ENCODE measurements at regions of chr5 and their contacts with region 1.

Region 1: DNA sequence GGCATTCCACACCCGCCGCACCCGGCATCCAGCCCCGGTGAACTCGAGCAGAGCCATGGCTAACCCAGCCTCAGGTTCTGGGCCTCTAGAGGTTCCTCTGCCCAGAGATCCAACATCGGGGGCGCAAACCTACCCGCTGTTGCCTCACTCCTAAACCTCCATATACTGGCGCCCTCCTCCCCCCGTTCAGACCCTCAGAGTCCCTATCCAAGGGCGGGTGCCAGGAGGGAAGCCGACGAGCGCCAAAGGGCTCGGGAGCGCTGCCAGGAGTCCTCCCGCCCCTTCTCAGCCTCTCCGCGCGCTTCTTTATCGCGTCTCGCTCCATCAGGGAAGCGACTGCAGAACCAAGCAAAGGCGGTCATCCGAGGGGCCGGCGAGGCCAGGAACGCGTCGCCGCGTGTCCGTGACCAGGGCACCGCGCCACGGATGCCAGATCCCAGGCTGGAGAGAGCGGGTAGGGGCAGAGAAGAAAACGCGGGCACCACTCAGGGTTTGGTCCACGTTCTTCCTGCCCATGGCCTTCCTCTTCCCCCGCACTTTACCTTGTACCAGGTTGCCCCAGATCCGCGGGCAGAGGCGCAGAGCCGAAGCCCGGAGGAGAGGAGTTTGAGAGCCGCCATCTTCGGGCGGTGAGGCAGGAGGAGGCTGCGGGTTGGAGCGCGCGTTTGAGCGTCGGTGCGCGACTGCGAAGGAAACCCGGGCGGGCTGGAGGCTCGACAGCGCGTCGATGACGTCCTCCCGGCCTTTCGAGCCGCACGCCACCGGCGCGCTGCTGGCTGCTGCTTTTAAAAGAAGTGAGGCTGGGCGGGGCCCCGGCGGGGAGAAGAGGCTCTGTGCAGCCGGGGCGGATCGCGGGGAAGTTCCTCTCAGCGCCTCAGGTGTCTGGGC is at the start of gene OXCT1:
- DNase-seq: peak; percentile 93
- H3K4me3 ChIP-seq: peak within 1 kb of the TSS; percentile 65 to 83 (median 80)
- H3K27ac ChIP-seq: peak within 1 kb of the TSS; percentile 93 to 98 (median 94)
- H3K4me1 ChIP-seq: peaks cover 0 to 33% (median 20%) of the 10 kb centered on the region in 4 donors
- H3K27me3 ChIP-seq: no peaks in the 10 kb centered on the region
- CTCF ChIP-seq: no peak
- EP300 ChIP-seq: peak in 1 of 4 donors; percentile 19
- POLR2A ChIP-seq: peak; percentile 69 to 86
- total RNA-seq, gene OXCT1: 24.2 to 35.0 (median 33.2) TPM

Region 2: GRCh38 chr5:41722359-41722950 is 147.5 kb before region 1 on chr5:
- intact Hi-C with region 1: no loop called
- DNase-seq: no peak
- H3K4me3 ChIP-seq: no peak overlapping the region
- H3K27ac ChIP-seq: no peak overlapping the region
- H3K4me1 ChIP-seq: no peaks in the 10 kb centered on the region
- H3K27me3 ChIP-seq: no peaks in the 10 kb centered on the region
- CTCF ChIP-seq: no peak
- EP300 ChIP-seq: no peak
- POLR2A ChIP-seq: no peak

Region 3: DNA sequence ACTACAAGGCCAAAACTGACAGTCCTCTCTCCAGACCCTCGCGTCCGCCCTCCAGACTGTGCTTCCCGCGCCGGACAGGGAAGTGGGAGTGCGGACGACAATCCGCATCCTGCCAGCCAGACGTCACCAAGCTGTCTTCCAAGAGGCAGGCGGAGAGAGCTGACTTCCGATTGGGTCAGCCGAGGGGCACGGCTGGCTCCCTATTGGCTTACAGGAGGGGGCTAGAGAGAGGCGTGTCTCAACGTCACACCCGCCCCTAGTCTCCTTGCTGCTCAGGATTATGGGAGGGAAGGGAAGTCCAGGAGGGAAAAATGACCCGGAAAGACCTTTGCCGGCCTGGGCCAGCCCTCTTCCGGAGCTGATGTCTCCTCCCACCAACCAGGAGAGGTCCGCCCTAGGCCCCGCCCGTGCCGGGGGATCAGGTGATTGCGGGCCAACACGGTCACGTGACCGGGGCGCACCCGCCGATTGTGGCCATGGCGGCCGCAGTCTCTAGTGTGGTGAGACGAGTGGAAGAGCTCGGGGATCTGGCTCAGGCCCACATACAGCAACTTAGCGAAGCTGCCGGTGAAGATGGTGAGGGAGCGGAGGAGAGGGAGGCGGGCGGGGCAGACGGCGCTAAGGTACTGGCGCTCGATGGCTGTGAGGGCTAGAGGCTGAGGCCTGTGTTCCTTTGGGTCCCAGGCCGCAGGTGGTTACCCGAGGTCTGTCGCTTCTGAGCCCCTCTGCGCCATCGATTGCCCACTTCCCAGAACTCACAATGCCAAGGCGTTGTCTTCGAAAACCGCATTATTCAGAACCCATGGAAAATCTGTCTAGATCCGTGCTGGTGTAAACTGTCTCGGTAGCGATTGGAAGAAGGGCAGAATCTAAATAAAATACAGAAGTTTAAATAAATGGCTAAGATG is 34.2 kb after region 1 on chr5 and contains the start of gene RIMOC1:
- intact Hi-C with region 1: loop called (anchors 1 kb)
- DNase-seq: peak; percentile 100
- H3K4me3 ChIP-seq: peak within 1 kb of the TSS; percentile 56 to 81 (median 77)
- H3K27ac ChIP-seq: peak within 1 kb of the TSS; percentile 86 to 95 (median 92)
- H3K4me1 ChIP-seq: peaks cover 0 to 47% (median 18%) of the 10 kb centered on the region in 4 donors
- H3K27me3 ChIP-seq: no peaks in the 10 kb centered on the region
- CTCF ChIP-seq: no peak
- EP300 ChIP-seq: peak in 2 of 4 donors; percentile 51 to 65
- POLR2A ChIP-seq: peak; percentile 87 to 90
- total RNA-seq, gene RIMOC1: 14.9 to 19.3 (median 17.9) TPM

Measured in sigmoid colon (tissue), 7 donors.